Cardiac septum (tissue), 1 donor: ENCODE measurements at regions of chr13 and their contacts with region 1.

Region 1: DNA sequence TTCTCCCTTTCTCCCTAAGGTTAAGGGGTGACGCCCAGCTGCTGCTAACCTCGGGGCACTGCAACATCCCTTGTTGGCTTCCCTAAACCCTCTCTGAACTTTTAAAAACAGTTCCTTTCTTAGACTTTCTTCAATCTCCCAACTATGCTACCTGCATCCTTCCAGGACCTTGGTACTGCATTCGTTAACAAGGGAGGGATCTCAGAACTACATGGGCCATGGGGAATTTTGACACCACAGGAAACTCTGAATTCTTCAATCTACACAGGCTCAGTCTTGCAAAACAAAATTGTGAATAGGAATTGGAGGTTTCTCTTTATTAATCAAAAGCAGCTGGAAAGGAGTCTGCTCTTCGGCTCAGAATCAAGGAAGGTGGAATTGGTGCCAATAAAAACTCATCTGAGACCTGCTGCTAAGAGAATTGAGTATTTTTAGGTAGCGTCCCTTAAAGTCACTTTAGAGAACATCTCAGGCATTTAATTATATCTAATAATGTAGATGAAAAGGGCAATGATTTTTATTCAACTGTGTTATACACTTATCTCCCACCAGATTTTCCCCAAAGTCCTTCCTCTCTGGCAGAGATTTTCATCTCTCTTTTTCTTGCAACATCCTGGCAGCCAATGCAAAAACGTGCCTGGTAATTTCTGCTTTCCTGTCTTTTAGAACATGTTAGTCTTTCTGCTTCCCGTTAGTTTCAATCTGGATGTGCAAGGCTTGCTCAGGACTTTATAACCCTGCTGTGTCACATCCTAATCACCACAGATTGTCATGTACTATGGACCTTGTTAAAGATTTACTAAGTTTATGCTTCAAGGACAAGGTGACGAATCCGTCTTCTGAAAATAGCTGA is 69.1 kb upstream of the SLC15A1 start:
- DNase-seq: no peak

Region 2: DNA sequence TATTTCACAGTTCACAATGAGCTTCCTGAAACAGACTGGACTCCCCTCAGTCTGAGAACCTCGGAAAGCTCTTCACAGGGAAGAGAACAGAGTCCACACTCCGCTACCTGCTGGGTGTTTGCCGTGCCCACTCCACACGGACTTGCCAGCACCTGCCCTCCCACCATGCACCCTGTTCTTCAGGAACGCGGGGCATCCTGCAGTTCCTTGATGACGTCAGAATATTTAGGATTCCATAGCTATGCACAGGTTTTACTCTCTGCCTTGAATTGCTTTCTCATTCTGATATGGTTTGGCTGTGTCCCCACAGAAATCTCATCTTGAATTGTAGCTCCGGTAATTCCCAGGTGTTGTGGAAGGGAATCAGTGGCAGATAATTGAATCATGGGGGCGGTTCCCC is 753.1 kb before region 1 on chr13:
- intact Hi-C with region 1: no loop called
- DNase-seq: no peak

Region 3: GRCh38 chr13:98454389-98454881 is 367.2 kb before region 1 on chr13:
- intact Hi-C with region 1: loop called (anchors 10 kb)
- DNase-seq: no peak

Region 4: DNA sequence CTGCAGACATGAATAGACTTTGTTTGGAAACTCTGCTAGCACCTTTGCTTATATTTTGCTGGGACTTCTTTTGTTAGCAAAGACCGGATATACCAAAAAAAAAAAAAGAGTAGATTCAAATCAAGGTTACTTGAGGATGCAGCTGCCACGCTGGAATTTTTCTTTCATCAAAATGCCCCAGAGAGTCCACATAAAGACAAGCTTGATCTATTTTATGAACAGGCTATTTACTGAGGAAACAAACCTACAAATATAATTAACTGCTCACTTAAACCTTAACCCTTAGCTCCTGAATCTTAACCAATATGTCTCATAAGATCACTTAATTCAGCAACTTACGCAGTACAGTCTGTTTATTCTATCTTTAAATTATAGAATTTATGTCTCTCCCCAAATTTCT is 183.4 kb after region 1 on chr13:
- intact Hi-C with region 1: no loop called
- DNase-seq: no peak